Activated T-helper 1 cell treated with anti-CD3 and anti-CD28 coated beads, Interleukin-12 subunit alpha, Interleukin-12 subunit beta, Interleukin-2, Interleukin-4 antibody, amounts not matched to agents 30 ng/mL and 10 ng/mL and 1 ng/mL, durations not matched to agents 14 hours and 24 hours and 36 hours (primary cell): ENCODE measurements at regions of chr5 and their contacts with region 1.

Region 1: DNA sequence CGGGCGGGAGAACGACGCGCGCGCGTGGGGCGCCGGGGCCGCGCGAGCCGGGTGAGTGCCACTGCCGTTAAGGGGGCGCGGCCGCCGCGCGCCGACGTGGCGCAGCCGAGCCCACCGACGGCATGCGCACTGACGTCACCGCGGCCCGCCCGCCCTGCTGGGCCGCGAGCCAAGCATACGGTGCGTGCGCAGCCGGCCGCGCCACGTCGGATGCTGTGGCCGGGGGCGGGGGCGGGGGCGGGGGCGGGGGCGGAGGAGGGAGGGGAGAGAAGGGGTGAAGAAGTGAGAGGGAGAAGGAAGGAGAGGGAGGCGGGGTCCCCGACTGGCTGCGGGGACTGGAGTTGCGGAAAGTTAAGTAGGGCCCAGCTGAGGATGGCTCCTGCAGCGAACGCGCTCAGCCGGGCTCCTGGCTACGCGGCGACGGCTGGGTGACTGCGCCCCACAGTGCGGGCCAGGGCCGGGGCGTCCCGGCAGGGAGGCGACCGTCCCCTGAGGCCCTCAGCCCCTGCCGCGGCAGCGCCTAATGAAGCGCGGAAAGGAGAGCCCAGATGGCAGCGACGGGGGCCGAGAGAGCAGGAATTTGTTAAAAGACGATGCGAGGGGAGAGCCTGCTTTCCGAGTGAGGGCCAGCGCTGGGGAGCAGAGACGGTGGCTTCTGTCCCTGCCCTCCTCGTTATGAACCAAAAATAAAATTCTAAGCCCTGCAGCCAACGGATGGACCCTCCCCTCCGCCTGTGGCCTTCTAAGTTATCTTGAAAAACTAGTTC is at the start of gene DAP:
- DNase-seq: peak; percentile 91
- H3K4me3 Mint-ChIP-seq: peak within 1 kb of the TSS; percentile 93
- H3K27ac Mint-ChIP-seq: peak within 1 kb of the TSS; percentile 89
- H3K4me1 Mint-ChIP-seq: peaks cover 50% of the 10 kb centered on the region
- H3K27me3 Mint-ChIP-seq: peaks cover 9% of the 10 kb centered on the region
- total RNA-seq, gene DAP: 62.6 and 64.7 TPM in 2 replicates

Region 2: DNA sequence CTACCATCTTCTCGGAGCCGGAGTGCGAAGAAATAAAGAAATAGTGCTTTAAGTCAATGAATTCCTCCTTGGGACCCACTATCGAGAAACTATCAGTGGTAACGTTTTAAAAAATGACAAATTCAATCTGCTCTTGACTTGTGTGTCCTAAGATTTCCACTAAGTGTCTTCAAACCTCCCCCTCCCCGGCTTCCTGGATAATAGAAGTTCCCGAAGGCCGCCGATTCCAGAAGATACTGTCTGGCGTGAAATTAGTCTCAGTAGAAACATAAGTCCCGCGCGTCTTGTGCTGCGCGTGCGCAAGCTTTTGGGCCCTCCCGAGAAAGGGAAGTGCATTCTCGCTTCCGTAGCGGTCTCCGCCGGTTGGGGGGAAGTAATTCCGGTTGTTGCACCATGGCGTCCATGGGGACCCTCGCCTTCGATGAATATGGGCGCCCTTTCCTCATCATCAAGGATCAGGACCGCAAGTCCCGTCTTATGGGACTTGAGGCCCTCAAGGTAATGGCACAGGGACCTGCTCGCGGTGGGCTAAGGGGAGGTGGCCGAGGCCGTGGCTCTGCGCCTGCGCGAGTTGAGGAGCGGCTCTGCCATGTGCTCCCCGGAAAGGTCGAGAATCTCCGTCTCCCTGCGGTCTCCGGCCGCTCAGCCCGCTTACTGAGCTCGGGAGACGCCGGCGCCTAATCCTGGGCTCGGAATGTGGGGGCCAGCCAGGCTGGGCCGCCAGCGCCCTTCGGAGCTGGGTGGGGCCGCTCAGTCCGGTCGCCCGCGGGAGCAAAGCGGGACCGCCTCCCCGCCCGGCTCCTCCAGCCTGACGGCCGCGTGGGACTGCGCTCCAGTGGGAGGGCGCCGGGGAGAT is 511.2 kb before region 1 on chr5 and contains the start of gene CCT5:
- intact Hi-C with region 1: loop called (anchors 1 kb)
- DNase-seq: peak; percentile 89
- H3K4me3 Mint-ChIP-seq: peak within 1 kb of the TSS; percentile 91
- H3K27ac Mint-ChIP-seq: peak within 1 kb of the TSS; percentile 100
- H3K4me1 Mint-ChIP-seq: peaks cover 53% of the 10 kb centered on the region
- H3K27me3 Mint-ChIP-seq: no peaks in the 10 kb centered on the region
- total RNA-seq, gene CCT5: 511 and 512 TPM in 2 replicates

Region 3: GRCh38 chr5:10441083-10441991 is 320.0 kb before region 1 on chr5 and contains the start of gene ROPN1L:
- intact Hi-C with region 1: loop called (anchors 1 kb)
- DNase-seq: peak; percentile 80
- H3K4me3 Mint-ChIP-seq: peak within 1 kb of the TSS; percentile 85
- H3K27ac Mint-ChIP-seq: no peak within 1 kb of the TSS
- H3K4me1 Mint-ChIP-seq: peaks cover 35% of the 10 kb centered on the region
- H3K27me3 Mint-ChIP-seq: peaks cover 2% of the 10 kb centered on the region
- total RNA-seq, gene ROPN1L: 0.16 and 0.20 TPM in 2 replicates

Region 4: DNA sequence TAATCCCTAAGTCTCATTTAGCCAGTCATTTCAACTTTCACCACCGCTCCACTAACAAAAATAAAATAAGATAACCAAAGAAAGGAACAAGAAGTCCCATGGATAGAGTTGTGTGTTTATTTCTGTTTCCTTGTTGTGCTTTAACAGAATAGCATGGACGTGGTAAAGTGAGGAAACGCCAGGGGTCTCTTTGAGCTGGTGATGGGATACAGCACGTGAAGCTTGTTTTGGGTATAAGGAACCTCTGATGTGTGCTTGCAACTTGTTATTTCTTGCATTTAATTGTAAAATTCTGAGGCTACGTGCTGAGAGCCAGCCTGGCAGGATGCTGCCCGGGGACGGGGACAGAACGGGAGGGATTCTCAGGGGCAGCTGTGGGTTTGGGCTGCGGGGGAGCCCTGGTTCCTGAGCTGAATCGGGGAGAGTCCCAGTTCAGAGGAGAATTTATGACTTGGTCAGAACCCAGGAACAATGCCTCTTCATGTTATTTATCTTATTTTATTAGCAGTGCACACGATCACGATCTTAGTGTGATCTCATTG is 134.1 kb before region 1 on chr5:
- intact Hi-C with region 1: loop called (anchors 1 kb)
- DNase-seq: no peak
- H3K4me3 Mint-ChIP-seq: peak overlapping the region; percentile 77
- H3K27ac Mint-ChIP-seq: peak overlapping the region; percentile 90
- H3K4me1 Mint-ChIP-seq: peaks cover 50% of the 10 kb centered on the region
- H3K27me3 Mint-ChIP-seq: peaks cover 3% of the 10 kb centered on the region

Region 5: GRCh38 chr5:10695055-10695649 is 66.2 kb before region 1 on chr5:
- intact Hi-C with region 1: loop called (anchors 5 kb)
- DNase-seq: no peak
- H3K4me3 Mint-ChIP-seq: no peak overlapping the region
- H3K27ac Mint-ChIP-seq: no peak overlapping the region
- H3K4me1 Mint-ChIP-seq: peaks cover 25% of the 10 kb centered on the region
- H3K27me3 Mint-ChIP-seq: no peaks in the 10 kb centered on the region